ENCODE measurements at regions of chr11 and their contacts with region 1.

Region 1: GRCh38 chr11:66418168-66418985 is 2.5 kb upstream of the NPAS4 start:
- DNase-seq: peak; percentile 79 to 93
- ATAC-seq: peak; percentile 97 to 98 (median 97)
- H3K4me3 ChIP-seq: no peak overlapping the region
- H3K27ac ChIP-seq: no peak overlapping the region
- H3K4me1 ChIP-seq: peaks cover 35% of the 10 kb centered on the region
- H3K27me3 ChIP-seq: no peaks in the 10 kb centered on the region
- CTCF ChIP-seq: peak; percentile 41

Region 2: DNA sequence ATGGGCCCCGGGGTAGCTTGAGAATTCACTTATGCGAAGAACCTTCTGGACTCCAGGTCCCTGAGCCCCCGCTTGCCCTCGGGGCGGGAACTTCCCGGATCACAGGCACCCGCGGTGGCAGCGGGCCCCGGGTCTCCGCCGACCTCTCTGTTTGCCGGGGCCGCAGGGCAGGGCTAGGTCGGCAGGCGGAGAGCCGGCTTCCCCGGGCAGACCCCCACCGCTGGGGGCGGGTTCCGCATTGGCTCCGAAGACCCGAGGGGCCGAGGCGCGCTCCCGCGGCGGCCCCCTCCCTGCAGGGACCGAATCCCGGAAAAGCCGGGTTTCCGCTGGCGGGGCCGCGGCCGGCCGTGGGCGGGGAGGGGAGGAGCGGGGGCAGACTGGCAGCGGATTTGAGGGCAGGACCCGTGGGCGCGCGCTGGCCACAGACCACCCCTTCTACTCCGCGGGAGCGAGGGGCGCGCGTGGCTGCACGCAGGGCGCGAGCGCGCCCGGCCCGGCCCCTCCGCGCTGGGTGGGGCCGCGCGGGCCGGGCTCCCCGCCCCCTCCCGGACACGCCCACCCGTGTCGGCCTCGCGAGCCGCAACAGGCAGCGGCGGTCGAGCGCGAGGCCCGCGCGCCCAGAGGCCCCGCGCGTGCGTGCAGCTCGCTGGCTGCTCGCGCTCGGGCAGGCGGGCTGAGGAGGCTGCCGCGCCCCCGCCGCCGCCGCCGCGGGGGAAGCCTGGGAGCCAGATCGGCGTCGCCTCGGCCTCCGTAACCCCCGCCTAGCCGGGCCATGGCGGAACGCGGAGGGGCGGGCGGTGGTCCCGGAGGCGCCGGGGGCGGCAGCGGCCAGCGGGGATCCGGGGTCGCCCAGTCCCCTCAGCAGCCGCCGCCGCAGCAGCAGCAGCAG is 348.4 kb before region 1 on chr11 and contains the start of gene PACS1:
- intact Hi-C with region 1: no loop called
- DNase-seq: peak; percentile 83 to 86
- ATAC-seq: peak; percentile 71 to 77 (median 75)
- H3K4me3 ChIP-seq: peak within 1 kb of the TSS; percentile 93
- H3K27ac ChIP-seq: peak within 1 kb of the TSS; percentile 90
- H3K4me1 ChIP-seq: peaks cover 19% of the 10 kb centered on the region
- H3K27me3 ChIP-seq: no peaks in the 10 kb centered on the region
- CTCF ChIP-seq: no peak
- total RNA-seq, gene PACS1: 16.3 to 27.8 (median 24.9) TPM

Region 3: DNA sequence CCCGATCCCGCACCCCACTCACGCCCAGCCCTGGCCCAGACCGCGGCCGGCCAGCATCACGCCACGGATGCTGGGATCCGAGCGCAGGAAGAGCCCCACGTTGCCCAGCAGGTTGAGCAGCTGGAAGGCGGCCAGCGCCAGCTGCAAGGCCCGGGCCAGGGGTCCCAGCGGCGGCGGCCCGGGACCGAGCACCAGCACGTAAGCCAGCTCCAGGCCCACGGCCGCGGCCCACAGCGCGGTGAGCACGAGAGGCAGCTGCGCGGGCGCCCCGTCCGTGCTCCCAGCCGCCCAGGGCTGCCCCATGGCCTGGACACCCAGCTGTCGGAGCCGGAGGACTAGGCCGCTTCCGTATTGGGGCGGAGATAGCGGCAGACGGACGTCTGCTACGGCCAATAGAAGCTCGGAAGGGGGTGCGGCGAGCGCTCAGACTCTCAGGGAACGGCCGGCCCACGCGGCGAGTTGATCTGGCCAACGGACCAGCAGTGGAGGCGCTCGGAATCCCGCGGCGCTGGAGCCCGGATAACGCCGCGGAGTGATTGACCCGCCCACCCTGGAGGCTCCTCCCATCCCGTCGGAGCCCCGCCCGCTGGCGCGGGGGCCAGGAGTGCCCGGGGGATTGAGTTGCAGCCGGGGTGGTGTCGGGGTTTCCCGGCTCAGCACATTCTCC is 127.5 kb after region 1 on chr11 and contains the start of gene ZDHHC24:
- intact Hi-C with region 1: no loop called
- DNase-seq: peak; percentile 99
- ATAC-seq: peak; percentile 90 to 93 (median 92)
- H3K4me3 ChIP-seq: peak within 1 kb of the TSS; percentile 83
- H3K27ac ChIP-seq: peak within 1 kb of the TSS; percentile 89
- H3K4me1 ChIP-seq: peaks cover 33% of the 10 kb centered on the region
- H3K27me3 ChIP-seq: no peaks in the 10 kb centered on the region
- CTCF ChIP-seq: no peak
- total RNA-seq, gene ZDHHC24: 3.9 to 6.5 (median 5.2) TPM

Region 4: DNA sequence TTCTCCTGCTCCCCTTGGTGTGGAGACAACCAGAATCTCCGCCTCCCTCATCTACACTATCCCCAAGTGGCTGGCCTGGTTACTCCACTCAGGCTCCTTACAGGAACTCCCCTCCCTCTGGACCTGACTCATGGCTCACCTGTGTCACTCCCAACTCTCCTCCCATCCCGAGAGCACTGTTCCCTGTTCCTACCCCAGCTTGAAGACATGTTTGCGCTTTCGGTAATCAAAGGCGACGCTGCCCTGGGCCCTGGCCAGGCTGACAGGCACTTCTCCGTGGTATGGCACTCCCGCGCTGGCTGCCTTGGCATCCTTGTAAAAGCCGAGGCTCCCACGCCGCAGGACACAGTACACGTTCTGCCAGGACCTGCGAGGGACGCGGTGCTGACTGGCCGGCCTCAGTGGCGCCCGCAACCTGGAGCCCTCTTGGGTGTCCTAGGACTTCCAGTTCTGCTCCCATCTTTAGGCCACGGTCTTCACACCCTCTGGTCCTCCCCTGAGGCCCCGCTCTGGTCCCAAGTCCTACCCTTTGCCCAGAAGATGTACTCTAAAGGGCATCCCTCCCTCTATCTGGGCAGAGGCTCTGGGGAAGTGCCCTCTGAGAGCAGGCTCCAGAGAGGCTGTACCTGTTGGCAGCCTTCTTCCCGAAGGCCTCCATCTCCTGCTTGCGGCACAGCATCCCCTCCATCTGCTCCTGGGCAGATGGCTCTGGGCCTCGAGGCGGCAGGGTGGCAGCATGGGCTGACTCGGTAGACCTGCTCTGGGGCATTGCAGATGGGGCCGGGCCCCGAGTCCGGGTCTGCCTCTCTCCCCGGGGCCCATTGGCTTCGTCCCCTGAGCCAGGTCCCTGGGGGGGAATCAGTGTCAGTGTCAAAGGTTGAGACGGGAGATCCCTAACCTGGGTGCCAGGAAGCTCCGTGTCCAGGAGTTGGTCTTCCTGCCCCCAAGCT is 268.7 kb after region 1 on chr11:
- intact Hi-C with region 1: loop called in 1 of 2 experiments (anchors 10 kb)
- DNase-seq: no peak
- ATAC-seq: no peak
- H3K4me3 ChIP-seq: no peak overlapping the region
- H3K27ac ChIP-seq: no peak overlapping the region
- H3K4me1 ChIP-seq: no peaks in the 10 kb centered on the region
- H3K27me3 ChIP-seq: no peaks in the 10 kb centered on the region
- CTCF ChIP-seq: no peak

Measured in psoas muscle (tissue), 8 donors.